ENCODE measurements at regions of chr1 and their contacts with region 1.

Region 1: GRCh38 chr1:199067483-199067882 is 428.6 kb downstream of the PTPRC start:
- DNase-seq: no peak
- H3K4me3 ChIP-seq: no peak overlapping the region
- H3K27ac ChIP-seq: no peak overlapping the region
- H3K4me1 ChIP-seq: no peaks in the 10 kb centered on the region
- H3K27me3 ChIP-seq: no peaks in the 10 kb centered on the region
- CTCF ChIP-seq: no peak
- POLR2A ChIP-seq: no peak

Region 2: GRCh38 chr1:199774433-199775089 is 707.1 kb after region 1 on chr1:
- intact Hi-C with region 1: loop called (anchors 10 kb)
- DNase-seq: no peak
- H3K4me3 ChIP-seq: no peak overlapping the region
- H3K27ac ChIP-seq: no peak overlapping the region
- H3K4me1 ChIP-seq: no peaks in the 10 kb centered on the region
- H3K27me3 ChIP-seq: no peaks in the 10 kb centered on the region
- CTCF ChIP-seq: no peak
- POLR2A ChIP-seq: no peak